Left ventricle myocardium superior (tissue), 1 donor: ENCODE measurements at regions of chr18 and their contacts with region 1.

Region 1: GRCh38 chr18:66077066-66077465 is 326.3 kb downstream of the CDH7 start:
- DNase-seq: no peak
- ATAC-seq: no peak

Region 2: DNA sequence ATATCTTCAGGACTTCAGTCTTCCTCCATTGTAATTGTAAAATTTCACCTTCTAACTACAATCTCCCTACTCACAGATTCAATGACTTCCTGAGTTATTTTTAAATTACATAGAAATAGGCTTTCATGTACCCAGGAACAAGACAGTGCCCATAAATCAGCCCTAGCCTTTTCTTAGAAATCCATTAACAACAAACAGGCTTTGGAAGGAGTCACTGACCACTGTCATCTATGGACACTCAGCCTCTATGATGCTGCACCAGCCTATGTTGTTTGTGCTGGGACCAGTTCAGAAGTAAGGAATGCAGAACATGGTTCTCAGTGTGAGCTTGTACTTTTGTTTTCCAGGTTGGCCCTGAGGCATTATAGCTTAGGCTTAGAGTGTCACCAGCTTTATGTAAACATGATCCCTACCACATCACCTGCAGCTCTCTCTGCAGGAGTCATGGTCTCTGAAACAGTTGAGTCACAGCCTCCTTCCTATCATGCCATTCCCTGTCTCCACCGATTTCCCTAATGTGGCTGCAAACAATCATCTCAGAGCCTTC is 662.0 kb before region 1 on chr18:
- intact Hi-C with region 1: no loop called
- DNase-seq: no peak
- ATAC-seq: no peak

Region 3: GRCh38 chr18:66136039-66136438 is 59.0 kb after region 1 on chr18:
- intact Hi-C with region 1: loop called (anchors 10 kb)
- DNase-seq: no peak
- ATAC-seq: peak; percentile 98